Activated CD4-positive, alpha-beta T cell treated with anti-CD3 and anti-CD28 coated beads for 36 hours (primary cell): ENCODE measurements at regions of chr1 and their contacts with region 1.

Region 1: GRCh38 chr1:117512743-117513321 is 93.0 kb upstream of the TENT5C start:
- DNase-seq: no peak
- ATAC-seq: no peak
- H3K4me3 Mint-ChIP-seq: no peak overlapping the region
- H3K27ac Mint-ChIP-seq: no peak overlapping the region
- H3K4me1 Mint-ChIP-seq: peaks cover 3% of the 10 kb centered on the region
- H3K27me3 Mint-ChIP-seq: no peaks in the 10 kb centered on the region

Region 2: GRCh38 chr1:117398957-117399356 is 113.9 kb before region 1 on chr1:
- CTCF ChIA-PET with region 1: no interaction called
- POLR2A ChIA-PET with region 1: no interaction called
- intact Hi-C with region 1: no loop called
- DNase-seq: no peak
- ATAC-seq: no peak
- H3K4me3 Mint-ChIP-seq: no peak overlapping the region
- H3K27ac Mint-ChIP-seq: no peak overlapping the region
- H3K4me1 Mint-ChIP-seq: peaks cover 50% of the 10 kb centered on the region
- H3K27me3 Mint-ChIP-seq: no peaks in the 10 kb centered on the region

Region 3: DNA sequence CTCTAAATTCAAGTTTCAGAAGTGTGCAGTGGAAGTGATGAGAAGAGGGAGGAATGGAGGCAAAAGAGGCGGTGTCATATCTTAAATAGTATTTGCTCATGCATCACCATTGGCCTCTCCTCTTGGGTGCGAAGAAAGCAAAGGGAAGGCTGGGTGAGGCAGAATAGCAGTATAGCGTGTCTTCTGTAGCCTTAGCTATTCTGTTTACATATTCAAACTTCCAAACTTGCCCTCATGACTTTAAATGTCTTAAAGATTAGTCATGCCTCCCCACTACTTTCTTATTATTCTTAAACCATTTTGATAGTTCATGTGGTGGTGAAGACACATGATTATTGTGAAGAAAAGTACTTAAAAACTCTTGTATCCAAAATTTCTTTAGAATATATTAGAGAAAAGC is 11.6 kb before region 1 on chr1:
- CTCF ChIA-PET with region 1: interaction called, 12 read pairs
- POLR2A ChIA-PET with region 1: no interaction called
- intact Hi-C with region 1: no loop called
- DNase-seq: no peak
- ATAC-seq: no peak
- H3K4me3 Mint-ChIP-seq: no peak overlapping the region
- H3K27ac Mint-ChIP-seq: no peak overlapping the region
- H3K4me1 Mint-ChIP-seq: no peaks in the 10 kb centered on the region
- H3K27me3 Mint-ChIP-seq: no peaks in the 10 kb centered on the region

Region 4: DNA sequence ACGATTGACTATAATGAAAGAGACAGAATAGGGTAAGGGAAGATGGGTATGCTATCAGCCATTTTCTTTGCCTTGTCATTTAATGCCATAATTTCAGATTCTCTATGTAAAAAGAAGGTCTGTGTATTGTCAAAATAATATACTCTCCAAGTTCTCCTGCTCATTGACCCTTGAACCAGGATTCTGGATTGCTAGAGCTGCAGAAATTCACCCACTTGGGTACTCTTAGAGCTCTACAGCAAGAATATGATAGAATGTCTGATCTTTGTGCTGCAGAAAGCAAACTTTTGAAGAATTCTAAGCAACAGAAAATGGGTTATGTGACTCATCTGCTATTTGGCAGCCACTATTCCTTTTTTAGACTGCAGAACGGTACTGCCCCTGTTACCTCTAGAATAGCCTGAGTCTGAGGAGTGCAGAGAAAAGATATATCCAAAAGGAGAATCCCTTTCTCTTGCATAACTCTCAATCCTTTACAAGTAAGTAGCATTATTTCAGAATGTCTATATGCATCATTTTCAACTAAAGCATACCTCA is 14.8 kb after region 1 on chr1:
- CTCF ChIA-PET with region 1: interaction called, 52 read pairs
- POLR2A ChIA-PET with region 1: no interaction called
- intact Hi-C with region 1: no loop called
- DNase-seq: no peak
- ATAC-seq: peak; percentile 37
- H3K4me3 Mint-ChIP-seq: no peak overlapping the region
- H3K27ac Mint-ChIP-seq: no peak overlapping the region
- H3K4me1 Mint-ChIP-seq: peaks cover 31% of the 10 kb centered on the region
- H3K27me3 Mint-ChIP-seq: no peaks in the 10 kb centered on the region

Region 5: DNA sequence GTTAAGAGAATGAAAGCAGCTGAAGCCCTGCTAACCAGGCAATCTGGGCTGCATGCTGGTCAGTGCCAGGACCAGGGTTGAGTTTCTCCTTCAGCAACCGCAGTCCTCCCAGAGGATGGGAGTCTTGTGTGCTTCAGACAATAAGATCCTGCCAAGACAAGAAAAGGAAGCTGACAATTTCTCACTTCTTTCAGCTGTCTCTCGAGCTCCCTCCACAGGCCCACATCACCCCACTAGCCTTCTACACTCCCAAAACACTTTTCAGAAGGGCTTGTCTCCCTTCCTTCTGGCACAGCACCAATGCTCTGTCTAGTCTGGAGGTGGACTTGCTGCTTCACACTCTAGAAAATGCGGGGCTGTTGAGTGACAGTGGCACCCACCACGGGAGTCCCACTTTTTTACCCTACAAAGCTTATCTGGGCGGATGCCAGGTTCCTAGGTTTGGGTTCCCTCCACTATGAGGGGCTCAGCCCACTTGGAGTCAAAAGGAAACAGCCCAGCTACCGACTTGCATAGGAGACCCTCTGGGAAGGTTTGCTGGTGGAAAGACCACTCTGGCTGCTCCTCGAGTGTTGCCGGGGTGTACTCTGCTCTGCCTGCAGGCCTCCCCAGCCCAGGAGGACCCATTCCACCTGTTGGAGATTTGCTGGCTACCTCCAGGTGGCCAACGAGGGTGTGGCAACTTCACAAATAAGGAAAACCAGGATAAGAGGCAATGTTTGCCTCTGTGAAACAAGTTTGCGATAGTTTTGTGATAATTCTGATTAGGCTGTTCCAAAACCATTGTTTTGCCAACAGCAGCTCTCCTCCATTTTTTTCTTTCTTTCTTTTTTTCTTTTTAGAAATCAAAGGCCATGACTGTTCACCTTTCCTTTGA is 161.9 kb after region 1 on chr1:
- CTCF ChIA-PET with region 1: interaction called, 7 read pairs
- POLR2A ChIA-PET with region 1: no interaction called
- intact Hi-C with region 1: loop called in 1 of 2 experiments (anchors 1 kb)
- DNase-seq: peak; percentile 67
- ATAC-seq: peak; percentile 72
- H3K4me3 Mint-ChIP-seq: no peak overlapping the region
- H3K27ac Mint-ChIP-seq: no peak overlapping the region
- H3K4me1 Mint-ChIP-seq: peaks cover 16% of the 10 kb centered on the region
- H3K27me3 Mint-ChIP-seq: no peaks in the 10 kb centered on the region

Region 6: DNA sequence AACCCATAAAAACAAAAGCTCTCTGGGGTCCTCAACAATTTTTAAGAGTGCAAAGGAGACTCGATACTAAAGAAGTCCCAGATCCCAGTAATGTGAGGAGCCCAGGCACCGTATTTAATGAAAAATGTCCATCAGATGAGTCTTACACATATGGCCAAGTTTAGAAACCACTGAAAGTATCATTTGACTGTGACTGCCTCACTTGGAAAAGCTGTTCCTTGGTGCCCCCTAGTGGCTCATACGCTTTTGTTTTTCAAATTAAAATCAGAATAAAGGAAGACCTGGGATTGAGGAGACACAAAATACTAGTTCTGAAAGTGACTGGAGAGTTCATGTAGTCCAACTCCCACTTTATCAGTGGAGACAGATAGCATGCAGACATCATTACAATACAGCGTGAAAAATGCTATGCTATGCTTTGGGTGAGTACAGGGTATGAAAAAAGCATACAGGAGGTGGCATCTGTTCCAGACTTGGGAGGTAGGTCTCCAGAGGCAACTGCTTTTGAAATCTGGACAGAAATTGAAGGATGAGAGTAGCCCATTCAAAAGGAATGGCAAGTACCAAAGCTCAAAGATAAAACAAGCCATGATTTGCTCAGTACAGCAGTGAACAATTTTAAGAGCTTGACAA is 382.8 kb after region 1 on chr1:
- CTCF ChIA-PET with region 1: interaction called, 49 read pairs
- POLR2A ChIA-PET with region 1: no interaction called
- intact Hi-C with region 1: loop called (anchors 1 to 2 kb)
- DNase-seq: peak; percentile 77
- ATAC-seq: peak; percentile 91
- H3K4me3 Mint-ChIP-seq: no peak overlapping the region
- H3K27ac Mint-ChIP-seq: no peak overlapping the region
- H3K4me1 Mint-ChIP-seq: peaks cover 4% of the 10 kb centered on the region
- H3K27me3 Mint-ChIP-seq: no peaks in the 10 kb centered on the region